Activated naive CD4-positive, alpha-beta T cell treated with anti-CD3 and anti-CD28 coated beads for 36 hours (primary cell): ENCODE measurements at regions of chr7 and their contacts with region 1.

Region 1: GRCh38 chr7:2844165-2844898 is at the start of gene GNA12:
- DNase-seq: peak; percentile 99
- H3K4me3 Mint-ChIP-seq: peak within 1 kb of the TSS; percentile 79
- H3K27ac Mint-ChIP-seq: peak within 1 kb of the TSS; percentile 70
- H3K4me1 Mint-ChIP-seq: peaks cover 33% of the 10 kb centered on the region
- H3K27me3 Mint-ChIP-seq: no peaks in the 10 kb centered on the region
- total RNA-seq, gene GNA12: 14.1 to 15.0 TPM

Region 2: DNA sequence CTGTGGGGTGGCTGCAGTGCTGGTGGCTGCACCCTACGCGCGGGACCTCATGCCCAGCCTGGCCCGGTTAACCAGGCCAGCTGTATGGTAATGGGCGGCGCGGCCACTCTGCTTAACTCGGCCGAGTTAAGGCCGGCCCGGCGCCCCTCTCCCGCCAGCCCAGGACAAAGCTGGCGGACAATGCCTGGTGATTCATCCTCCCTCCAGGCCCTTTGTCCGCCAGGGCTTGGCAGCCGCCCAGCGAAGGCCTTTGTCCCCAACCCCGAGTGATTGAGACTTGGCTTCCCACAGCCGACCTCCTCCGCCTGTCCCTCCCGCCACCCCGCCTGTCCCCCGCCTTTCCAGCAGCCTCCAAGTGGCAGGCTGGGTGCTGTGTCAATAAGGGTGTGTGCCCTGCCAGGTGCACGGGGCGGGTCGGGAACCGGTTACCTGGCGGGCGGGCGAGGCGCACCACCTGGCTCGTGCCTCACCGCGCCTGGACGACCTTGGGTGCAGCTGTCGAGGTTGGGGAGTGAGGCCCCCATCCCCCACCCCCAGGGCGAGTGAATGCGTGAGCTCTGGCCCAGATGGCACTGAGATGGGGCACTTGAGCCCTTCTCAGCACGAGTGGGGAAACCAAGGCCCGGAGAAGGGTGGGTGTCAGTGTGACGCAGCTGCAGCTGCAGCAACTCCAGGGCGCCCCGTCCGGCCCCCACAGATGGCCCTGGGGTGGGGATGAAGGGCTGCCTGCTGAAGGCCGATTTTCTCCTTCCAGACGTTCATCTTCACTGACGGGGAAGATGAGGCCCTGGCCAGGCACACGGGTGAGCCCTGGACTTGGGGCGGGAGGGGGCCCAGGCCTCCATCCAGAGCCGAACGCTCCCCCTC is 320.2 kb before region 1 on chr7:
- CTCF ChIA-PET with region 1: no interaction called
- intact Hi-C with region 1: loop called (anchors 5 kb)
- DNase-seq: no peak
- H3K4me3 Mint-ChIP-seq: no peak overlapping the region
- H3K27ac Mint-ChIP-seq: no peak overlapping the region
- H3K4me1 Mint-ChIP-seq: peaks cover 58% of the 10 kb centered on the region
- H3K27me3 Mint-ChIP-seq: no peaks in the 10 kb centered on the region

Region 3: GRCh38 chr7:2632733-2633537 is 211.4 kb before region 1 on chr7:
- CTCF ChIA-PET with region 1: no interaction called
- intact Hi-C with region 1: loop called (anchors 2 kb)
- DNase-seq: peak; percentile 67
- H3K4me3 Mint-ChIP-seq: peak overlapping the region; percentile 92
- H3K27ac Mint-ChIP-seq: peak overlapping the region; percentile 53
- H3K4me1 Mint-ChIP-seq: peaks cover 15% of the 10 kb centered on the region
- H3K27me3 Mint-ChIP-seq: no peaks in the 10 kb centered on the region

Region 4: DNA sequence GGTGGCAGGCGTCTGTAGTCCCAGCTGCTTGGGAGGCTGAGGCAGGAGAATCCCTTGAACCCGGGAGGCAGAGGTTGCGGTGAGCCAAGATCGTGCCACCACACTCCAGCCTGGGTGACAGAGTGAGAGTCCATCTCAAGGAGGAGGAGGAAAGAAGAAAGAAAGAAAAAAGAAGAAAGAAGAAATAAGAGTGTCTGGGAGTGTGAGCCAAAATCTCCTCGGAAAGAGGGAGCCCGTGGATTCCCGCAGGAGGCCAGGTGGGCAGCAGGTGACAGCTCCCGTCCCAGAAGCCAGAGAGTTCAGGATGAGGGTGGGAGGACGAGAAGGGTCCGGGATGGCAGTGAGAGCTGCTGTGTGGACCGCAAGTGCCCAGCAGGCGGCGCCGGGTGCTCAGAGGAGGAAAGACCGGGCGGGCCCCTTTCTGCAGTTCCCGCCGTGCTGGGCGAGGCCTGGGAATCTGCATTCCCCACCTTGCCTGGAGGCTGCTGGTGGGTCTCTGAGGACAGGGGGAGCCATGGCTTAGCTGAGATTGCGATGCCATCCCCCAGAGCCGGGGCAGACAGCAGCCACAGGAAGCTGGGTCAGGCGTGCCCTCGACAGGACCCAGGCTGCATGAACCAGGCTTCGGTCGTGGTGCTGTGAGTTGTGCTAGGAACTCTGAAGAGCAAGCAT is 173.5 kb before region 1 on chr7:
- CTCF ChIA-PET with region 1: no interaction called
- intact Hi-C with region 1: loop called (anchors 5 kb)
- DNase-seq: peak; percentile 81
- H3K4me3 Mint-ChIP-seq: no peak overlapping the region
- H3K27ac Mint-ChIP-seq: no peak overlapping the region
- H3K4me1 Mint-ChIP-seq: peaks cover 5% of the 10 kb centered on the region
- H3K27me3 Mint-ChIP-seq: peaks cover 12% of the 10 kb centered on the region

Region 5: GRCh38 chr7:2870471-2870931 is 26.2 kb after region 1 on chr7:
- CTCF ChIA-PET with region 1: interaction called, 7 read pairs
- intact Hi-C with region 1: loop called (anchors 2 kb)
- DNase-seq: peak; percentile 94
- H3K4me3 Mint-ChIP-seq: peak overlapping the region; percentile 61
- H3K27ac Mint-ChIP-seq: peak overlapping the region; percentile 72
- H3K4me1 Mint-ChIP-seq: peaks cover 57% of the 10 kb centered on the region
- H3K27me3 Mint-ChIP-seq: no peaks in the 10 kb centered on the region

Region 6: GRCh38 chr7:3210531-3210930 is 366.2 kb after region 1 on chr7:
- CTCF ChIA-PET with region 1: no interaction called
- intact Hi-C with region 1: no loop called
- DNase-seq: no peak
- H3K4me3 Mint-ChIP-seq: no peak overlapping the region
- H3K27ac Mint-ChIP-seq: no peak overlapping the region
- H3K4me1 Mint-ChIP-seq: no peaks in the 10 kb centered on the region
- H3K27me3 Mint-ChIP-seq: peaks cover 2% of the 10 kb centered on the region